ENCODE measurements at regions of chr9 and their contacts with region 1.

Region 1: DNA sequence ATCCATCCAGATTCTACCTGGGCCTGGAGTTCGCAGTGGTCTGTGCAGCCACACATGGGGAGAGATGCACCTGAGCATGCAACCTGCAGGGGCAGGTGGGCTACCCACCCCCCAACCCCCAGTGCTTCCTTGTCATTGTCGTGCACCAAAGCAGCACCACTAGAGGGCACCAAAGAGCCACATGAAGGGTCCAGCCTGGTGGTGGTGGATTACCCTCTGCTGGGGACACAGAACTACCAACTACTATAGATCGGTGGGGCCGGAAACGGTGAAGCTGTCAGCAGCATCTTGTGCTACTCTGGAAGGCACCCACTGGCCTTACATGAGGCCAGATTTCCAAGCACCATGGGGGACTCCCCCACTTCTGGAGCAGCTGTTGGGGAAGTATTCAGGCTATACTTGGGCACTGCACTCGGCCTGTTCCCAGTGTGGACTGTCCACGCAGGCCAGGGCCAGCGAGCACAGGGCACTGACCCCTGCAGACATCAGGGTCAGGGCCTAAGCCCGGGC is 60.2 kb upstream of the TBC1D2 start:
- DNase-seq: peak; percentile 85
- H3K4me3 ChIP-seq: no peak overlapping the region
- H3K27ac ChIP-seq: no peak overlapping the region
- H3K4me1 ChIP-seq: no peaks in the 10 kb centered on the region
- H3K27me3 ChIP-seq: no peaks in the 10 kb centered on the region
- CTCF ChIP-seq: peak; percentile 95

Region 2: DNA sequence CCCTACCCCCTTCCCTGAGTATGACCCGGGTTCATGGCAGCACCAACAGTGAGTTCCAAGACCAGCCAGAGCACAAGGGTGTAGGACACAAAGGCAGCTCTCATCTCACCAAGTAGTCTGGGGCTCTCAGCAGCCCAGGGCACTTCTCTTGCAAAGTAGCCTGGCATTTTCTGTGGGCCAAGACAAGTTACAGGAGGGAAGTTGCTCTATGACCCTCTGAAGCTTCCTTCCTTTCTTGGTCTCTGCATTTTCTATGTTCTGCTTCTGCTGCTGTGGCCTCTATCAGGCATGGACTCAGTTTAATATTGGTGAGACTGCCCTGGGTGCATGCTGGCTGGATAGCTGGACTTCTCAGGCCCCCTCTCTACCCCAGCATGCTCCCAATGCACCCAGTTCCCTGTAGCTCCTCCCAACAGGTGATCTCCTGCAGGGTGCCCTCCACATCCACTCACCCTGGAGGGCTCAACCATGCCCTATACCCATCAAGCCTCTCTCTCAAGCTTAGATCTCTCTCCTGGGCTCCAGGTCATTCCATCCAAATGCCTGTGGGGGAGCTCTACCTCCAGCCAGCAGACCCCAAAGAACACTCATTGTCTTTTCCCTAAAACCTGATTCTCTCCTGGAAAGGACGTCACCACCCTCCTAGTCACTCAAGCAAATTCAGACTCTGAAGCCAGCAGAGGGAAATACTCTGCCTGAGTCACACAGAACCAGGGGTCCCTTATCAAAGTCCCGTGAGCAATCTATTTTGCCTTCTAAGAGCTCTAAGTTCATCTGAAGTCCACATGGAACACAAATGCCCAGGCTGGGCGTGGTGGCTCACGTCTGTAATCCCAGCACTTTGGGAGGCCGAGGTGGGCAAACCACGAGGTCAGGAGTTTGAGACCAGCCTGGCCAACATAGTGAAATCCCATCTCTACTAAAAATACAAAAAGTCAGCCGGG is 74.0 kb before region 1 on chr9:
- CTCF ChIA-PET with region 1: no interaction called
- POLR2A ChIA-PET with region 1: no interaction called
- intact Hi-C with region 1: no loop called
- DNase-seq: no peak
- H3K4me3 ChIP-seq: no peak overlapping the region
- H3K27ac ChIP-seq: no peak overlapping the region
- H3K4me1 ChIP-seq: no peaks in the 10 kb centered on the region
- H3K27me3 ChIP-seq: no peaks in the 10 kb centered on the region
- CTCF ChIP-seq: 0 out of 2 replicates have a peak, but pooled peaks have one; percentile 30

Region 3: DNA sequence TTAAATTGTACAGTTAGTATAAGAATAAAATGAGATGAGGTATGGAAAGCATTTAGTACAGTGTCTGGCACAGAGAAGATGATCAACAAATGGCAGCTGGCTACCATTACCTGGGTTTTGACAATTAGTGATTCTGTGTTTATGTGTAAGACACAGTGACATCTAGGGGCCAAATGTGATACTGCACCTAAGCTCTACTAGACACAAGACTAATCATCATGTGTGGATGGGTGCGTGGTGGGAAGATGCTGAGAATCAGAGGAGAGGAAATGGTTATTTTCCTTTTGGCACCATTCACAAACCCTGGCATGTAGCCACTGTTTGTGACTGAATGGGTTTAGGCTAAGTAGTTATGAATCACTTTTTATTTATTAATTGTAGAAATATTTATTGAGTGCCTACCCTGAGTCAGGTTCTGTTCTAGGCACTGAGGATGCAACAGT is 49.6 kb after region 1 on chr9:
- CTCF ChIA-PET with region 1: no interaction called
- POLR2A ChIA-PET with region 1: no interaction called
- intact Hi-C with region 1: no loop called
- DNase-seq: peak; percentile 28
- H3K4me3 ChIP-seq: no peak overlapping the region
- H3K27ac ChIP-seq: no peak overlapping the region
- H3K4me1 ChIP-seq: no peaks in the 10 kb centered on the region
- H3K27me3 ChIP-seq: peaks cover 32% of the 10 kb centered on the region
- CTCF ChIP-seq: peak; percentile 55

Region 4: DNA sequence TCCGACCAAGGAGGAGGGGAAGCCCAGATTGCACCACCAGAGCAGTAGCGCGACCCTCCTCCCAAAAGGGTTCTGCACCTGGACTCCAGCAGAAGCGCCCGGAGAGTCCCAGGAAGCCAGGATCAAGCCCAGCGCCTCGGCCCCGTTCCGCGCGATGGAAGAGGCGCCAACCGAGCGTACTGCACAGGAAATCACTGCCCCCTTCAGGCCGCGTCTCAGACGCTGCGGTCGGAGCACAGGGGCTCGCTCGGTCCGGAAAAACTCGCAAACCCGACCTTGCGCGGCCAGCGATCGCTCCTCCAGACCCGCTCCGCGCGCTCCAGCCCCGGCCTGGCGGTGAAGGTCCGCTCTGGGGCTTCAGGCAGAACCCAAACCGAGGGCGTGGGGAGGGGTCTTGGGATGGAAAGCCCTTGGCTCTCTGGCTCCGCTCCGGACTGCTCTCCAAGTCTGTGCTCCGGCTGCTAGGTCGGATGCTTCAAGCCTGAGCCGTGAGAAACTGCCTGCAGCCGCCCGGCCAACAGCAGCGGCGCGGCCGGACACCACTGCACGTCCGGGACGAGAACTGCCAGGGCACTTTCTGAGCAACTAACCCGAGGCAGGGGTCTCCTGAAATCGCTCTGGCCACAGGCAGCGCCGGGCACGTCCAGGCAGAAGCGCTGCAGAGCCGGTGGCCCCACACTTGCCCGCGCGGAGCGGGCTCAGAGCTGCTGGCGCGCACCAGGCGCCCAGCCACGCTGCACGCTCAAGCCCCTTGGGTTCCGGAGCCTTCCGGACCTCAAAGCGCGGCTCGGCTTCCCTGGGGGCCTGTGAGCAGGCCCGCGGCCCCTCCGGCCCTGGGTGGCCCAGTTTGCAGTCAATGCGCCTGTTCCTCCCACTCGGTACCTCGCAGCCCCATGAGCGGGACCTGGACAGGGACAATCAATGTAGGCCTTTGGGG is 391.8 kb after region 1 on chr9:
- CTCF ChIA-PET with region 1: interaction called, 3 read pairs
- POLR2A ChIA-PET with region 1: no interaction called
- intact Hi-C with region 1: loop called (anchors 2 kb)
- DNase-seq: peak; percentile 57
- H3K4me3 ChIP-seq: no peak overlapping the region
- H3K27ac ChIP-seq: no peak overlapping the region
- H3K4me1 ChIP-seq: no peaks in the 10 kb centered on the region
- H3K27me3 ChIP-seq: peaks cover 88% of the 10 kb centered on the region
- CTCF ChIP-seq: peak; percentile 63

Region 5: GRCh38 chr9:98775831-98776441 is 460.3 kb after region 1 on chr9:
- CTCF ChIA-PET with region 1: interaction called, 12 read pairs
- POLR2A ChIA-PET with region 1: no interaction called
- intact Hi-C with region 1: loop called (anchors 1 kb)
- DNase-seq: peak; percentile 80
- H3K4me3 ChIP-seq: no peak overlapping the region
- H3K27ac ChIP-seq: no peak overlapping the region
- H3K4me1 ChIP-seq: no peaks in the 10 kb centered on the region
- H3K27me3 ChIP-seq: no peaks in the 10 kb centered on the region
- CTCF ChIP-seq: peak; percentile 81

Region 6: GRCh38 chr9:98791147-98792095 is 475.8 kb after region 1 on chr9:
- CTCF ChIA-PET with region 1: no interaction called
- POLR2A ChIA-PET with region 1: no interaction called
- intact Hi-C with region 1: loop called (anchors 5 kb)
- DNase-seq: peak; percentile 51
- H3K4me3 ChIP-seq: no peak overlapping the region
- H3K27ac ChIP-seq: no peak overlapping the region
- H3K4me1 ChIP-seq: no peaks in the 10 kb centered on the region
- H3K27me3 ChIP-seq: no peaks in the 10 kb centered on the region
- CTCF ChIP-seq: peak; percentile 96

Region 7: GRCh38 chr9:99130069-99130468 is 814.5 kb after region 1 on chr9:
- CTCF ChIA-PET with region 1: interaction called, 15 read pairs
- POLR2A ChIA-PET with region 1: no interaction called
- intact Hi-C with region 1: no loop called
- DNase-seq: no peak
- H3K4me3 ChIP-seq: no peak overlapping the region
- H3K27ac ChIP-seq: no peak overlapping the region
- H3K4me1 ChIP-seq: no peaks in the 10 kb centered on the region
- H3K27me3 ChIP-seq: no peaks in the 10 kb centered on the region
- CTCF ChIP-seq: no peak

Measured in A673 (cell line).